ENCODE measurements at regions of chr20 and their contacts with region 1.

Region 1: DNA sequence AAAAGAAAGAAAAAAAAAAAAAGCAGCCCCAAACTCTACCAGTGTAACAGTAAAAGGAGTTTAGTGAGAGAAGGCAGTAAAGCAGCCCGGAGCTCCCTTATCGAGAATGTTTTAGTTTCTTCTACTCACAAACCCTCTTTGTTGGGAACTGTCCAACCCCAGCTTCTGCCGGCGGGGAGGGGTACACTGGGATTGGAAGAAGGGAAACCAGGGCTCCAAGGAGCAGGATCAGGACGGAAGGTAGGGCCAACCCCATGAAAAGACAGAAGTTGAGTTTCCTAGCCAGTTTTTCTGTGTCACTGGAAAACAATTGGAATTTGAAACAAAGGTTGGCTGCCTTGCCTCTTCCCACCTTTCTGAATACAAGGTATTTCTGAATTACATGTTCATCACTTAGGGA is 66.0 kb downstream of the KIZ start:
- DNase-seq: no peak
- H3K4me3 ChIP-seq: no peak overlapping the region
- H3K27ac ChIP-seq: no peak overlapping the region
- H3K4me1 ChIP-seq: no peaks in the 10 kb centered on the region
- H3K27me3 ChIP-seq: no peaks in the 10 kb centered on the region
- CTCF ChIP-seq: no peak
- POLR2A ChIP-seq: no peak

Region 2: GRCh38 chr20:21214431-21214830 is 22.6 kb after region 1 on chr20:
- intact Hi-C with region 1: loop called (anchors 1 kb)
- DNase-seq: no peak
- H3K4me3 ChIP-seq: no peak overlapping the region
- H3K27ac ChIP-seq: no peak overlapping the region
- H3K4me1 ChIP-seq: no peaks in the 10 kb centered on the region
- H3K27me3 ChIP-seq: no peaks in the 10 kb centered on the region
- CTCF ChIP-seq: no peak
- POLR2A ChIP-seq: no peak

Region 3: DNA sequence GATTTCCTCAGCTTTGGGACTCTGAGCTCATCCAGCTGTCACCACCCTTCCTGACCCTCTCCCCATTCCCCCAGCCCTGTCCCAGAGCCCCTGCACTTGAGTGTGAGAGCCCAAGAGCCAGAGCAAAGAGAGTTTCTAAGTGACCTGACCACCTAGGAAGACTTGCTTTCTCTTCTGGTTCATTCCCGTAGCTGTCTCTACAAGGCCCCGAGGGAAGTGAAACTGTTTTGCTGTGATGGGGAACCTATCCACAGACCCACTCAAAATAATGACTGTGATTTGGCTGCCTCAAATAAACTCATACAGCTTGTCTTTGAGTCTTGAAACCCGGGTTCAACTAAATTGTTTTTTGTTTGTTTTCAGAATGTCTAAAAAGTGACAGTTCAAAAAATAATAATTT is 36.7 kb after region 1 on chr20:
- intact Hi-C with region 1: no loop called
- DNase-seq: no peak
- H3K4me3 ChIP-seq: no peak overlapping the region
- H3K27ac ChIP-seq: no peak overlapping the region
- H3K4me1 ChIP-seq: no peaks in the 10 kb centered on the region
- H3K27me3 ChIP-seq: no peaks in the 10 kb centered on the region
- CTCF ChIP-seq: no peak
- POLR2A ChIP-seq: no peak

Measured in breast epithelium (tissue), 4 donors.